Ovary (tissue), 10 donors: ENCODE measurements at regions of chr19 and their contacts with region 1.

Region 1: DNA sequence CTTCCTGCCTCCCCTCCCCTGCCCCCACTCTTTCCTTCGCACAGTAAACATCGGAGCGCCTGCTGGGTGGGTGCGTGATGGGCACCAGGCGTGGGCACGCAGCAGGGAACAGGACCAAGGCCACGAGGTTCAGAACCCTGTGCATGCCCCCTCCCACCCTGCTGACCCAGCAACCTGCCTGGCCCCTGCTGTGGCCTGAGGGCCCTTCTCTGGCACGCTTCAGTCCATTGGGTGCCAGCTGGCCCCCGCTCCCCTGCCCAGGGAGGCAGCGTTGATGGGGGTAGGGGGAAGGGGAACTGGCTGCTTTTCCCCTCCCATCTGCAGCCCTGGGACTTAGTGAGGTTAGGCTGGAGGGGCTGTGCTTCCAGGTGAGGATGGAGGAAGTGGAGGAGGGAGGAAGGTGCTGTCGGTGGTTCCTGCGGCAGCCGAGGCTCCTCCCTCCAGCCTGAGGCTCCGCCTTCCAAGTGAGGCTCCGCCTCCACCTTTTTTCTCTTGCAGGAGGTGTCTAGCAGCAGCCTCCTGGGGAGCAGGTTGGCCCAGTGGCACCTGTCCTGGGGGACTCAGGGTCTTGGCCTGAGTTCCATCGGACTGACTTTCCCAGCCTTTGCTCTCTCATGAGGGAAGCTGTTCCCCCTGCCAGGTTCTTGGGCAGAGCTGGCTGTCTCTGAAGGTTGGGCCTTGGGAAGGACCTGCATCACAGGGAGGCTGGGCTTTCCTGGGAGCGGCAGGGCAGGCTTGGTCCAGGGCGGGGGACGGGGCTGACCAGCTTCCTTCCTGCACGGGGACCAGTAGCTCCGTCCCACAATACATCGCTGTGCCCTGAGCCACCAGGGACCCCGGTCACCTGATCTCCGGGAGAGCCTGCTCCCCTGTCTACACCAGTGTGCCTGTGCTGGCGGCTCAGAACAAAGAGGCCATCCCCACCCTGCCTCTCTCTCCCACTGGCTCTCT is 7.3 kb downstream of the PIAS4 start:
- DNase-seq: peak in 2 of 5 donors; percentile 33 to 52
- H3K4me3 ChIP-seq: no peak overlapping the region
- H3K27ac ChIP-seq: peak overlapping the region; percentile 4 to 75
- H3K4me1 ChIP-seq: peaks cover 17% of the 10 kb centered on the region
- H3K27me3 ChIP-seq: no peaks in the 10 kb centered on the region
- CTCF ChIP-seq: no peak
- EP300 ChIP-seq: no peak
- POLR2A ChIP-seq: no peak

Region 2: GRCh38 chr19:3958808-3959707 is 55.8 kb before region 1 on chr19:
- intact Hi-C with region 1: no loop called
- DNase-seq: peak in 1 of 5 donors; percentile 38
- H3K4me3 ChIP-seq: no peak overlapping the region
- H3K27ac ChIP-seq: no peak overlapping the region
- H3K4me1 ChIP-seq: no peaks in the 10 kb centered on the region
- H3K27me3 ChIP-seq: no peaks in the 10 kb centered on the region
- CTCF ChIP-seq: no peak
- EP300 ChIP-seq: no peak
- POLR2A ChIP-seq: no peak

Region 3: GRCh38 chr19:4058034-4058692 is 43.3 kb after region 1 on chr19:
- intact Hi-C with region 1: loop called in 1 of 4 experiments (anchors 5 kb)
- DNase-seq: peak; percentile 80 to 93 (median 86)
- H3K4me3 ChIP-seq: peak overlapping the region; percentile 21
- H3K27ac ChIP-seq: peak overlapping the region; percentile 85 to 92
- H3K4me1 ChIP-seq: peaks cover 44% of the 10 kb centered on the region
- H3K27me3 ChIP-seq: no peaks in the 10 kb centered on the region
- CTCF ChIP-seq: peak in 1 of 3 donors; percentile 31
- EP300 ChIP-seq: no peak
- POLR2A ChIP-seq: peak; percentile 20

Region 4: DNA sequence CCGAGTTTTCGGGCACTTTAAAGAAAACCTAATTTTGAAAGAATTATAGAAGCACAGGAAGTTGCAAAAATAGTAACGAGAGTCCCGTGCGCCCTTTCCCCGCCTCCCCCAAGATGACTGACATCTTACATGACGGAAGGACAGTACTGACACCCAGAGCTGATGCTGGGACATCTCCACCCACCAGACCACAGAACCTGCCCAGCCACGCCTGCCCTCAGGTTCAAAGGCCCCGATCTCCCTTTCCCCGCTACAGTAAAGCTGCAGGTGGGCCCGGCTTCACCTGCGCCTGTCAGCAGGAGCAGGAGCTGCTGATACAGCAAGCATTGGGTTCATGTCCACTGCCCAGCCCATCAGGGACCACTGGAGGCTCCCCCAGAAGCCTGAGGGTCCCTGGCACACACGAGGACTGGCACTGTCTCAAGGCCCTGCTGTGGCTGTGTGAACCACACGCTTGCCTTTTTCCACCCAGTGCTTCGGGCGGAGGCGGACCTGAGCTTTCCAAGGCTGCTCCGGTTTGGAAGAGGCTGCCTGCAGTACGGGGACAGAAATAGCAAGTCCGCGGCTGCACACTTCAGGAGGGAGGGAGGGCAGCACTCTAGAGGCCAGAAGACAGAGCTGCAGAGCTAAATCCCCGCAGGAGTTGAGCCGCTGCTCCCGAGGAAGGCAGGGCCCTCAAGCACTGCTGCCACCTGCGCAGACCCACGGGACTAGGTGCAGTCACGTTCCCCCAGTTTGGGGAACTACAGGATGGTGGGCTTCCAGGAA is 100.4 kb after region 1 on chr19:
- intact Hi-C with region 1: loop called in 1 of 4 experiments (anchors 10 kb)
- DNase-seq: no peak
- H3K4me3 ChIP-seq: no peak overlapping the region
- H3K27ac ChIP-seq: no peak overlapping the region
- H3K4me1 ChIP-seq: no peaks in the 10 kb centered on the region
- H3K27me3 ChIP-seq: no peaks in the 10 kb centered on the region
- CTCF ChIP-seq: no peak
- EP300 ChIP-seq: no peak
- POLR2A ChIP-seq: no peak